ENCODE measurements at regions of chr16 and their contacts with region 1.

Region 1: DNA sequence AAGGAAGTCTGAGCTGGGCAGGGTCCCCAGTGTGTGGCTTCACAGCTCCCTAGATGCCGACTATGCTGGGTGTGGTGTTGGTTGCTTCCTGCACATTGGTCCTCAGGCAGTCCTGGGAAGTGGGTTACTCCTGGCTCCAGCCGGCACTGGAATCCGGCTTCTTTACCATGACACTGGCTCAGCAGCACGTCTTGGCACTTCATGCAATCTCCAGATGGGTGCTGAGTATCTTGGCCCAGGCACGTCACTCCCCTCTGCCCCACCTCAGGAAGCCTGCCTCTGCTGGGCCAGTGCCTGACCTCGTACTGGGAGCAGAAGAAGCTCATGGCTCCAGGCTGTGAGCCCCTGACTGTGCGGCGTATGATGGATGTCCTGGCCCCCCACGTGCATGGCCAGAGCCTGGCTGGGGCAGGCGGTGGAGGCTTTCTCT is 24.5 kb downstream of the FCSK start:
- DNase-seq: peak; percentile 52
- H3K4me3 Mint-ChIP-seq: no peak overlapping the region
- H3K27ac Mint-ChIP-seq: peak overlapping the region; percentile 34
- H3K4me1 Mint-ChIP-seq: peaks cover 16% of the 10 kb centered on the region
- H3K27me3 Mint-ChIP-seq: no peaks in the 10 kb centered on the region

Region 2: DNA sequence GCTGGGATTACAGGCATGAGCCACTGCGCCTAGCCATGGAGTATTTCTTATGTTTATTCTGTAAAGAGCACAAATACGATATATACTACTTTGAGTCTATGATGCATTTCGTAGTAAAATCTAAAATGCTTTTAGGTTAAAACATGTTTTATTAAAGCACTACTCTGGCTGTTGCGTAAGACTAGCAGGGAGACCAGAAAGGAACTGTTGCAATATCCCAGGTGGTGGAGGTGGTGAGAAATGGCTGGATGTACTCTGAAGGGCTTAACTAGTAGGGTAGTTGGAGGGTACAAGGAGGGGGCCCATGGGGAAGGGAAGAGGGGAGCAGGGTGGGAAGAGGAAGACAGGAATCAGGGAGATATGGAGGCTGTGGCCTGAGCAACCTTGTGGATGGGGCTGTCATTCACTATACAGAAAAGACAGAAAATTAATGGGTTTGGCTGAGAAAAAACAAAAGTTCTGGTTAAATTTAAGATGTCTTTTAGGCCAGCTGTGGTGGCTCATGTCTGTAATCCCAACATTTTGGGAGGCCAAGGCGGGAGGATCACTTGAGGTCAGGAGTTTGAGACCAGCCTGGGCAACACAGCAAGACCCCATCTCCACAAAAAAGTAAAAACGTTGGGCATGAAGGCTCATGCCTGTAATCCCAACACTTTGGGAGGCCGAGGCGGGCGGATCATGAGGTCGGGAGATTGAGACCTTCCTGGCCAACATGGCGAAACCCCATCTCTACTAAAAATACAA is 75.8 kb before region 1 on chr16:
- intact Hi-C with region 1: loop called (anchors 5 kb)
- DNase-seq: no peak
- H3K4me3 Mint-ChIP-seq: no peak overlapping the region
- H3K27ac Mint-ChIP-seq: peak overlapping the region; percentile 89
- H3K4me1 Mint-ChIP-seq: peaks cover 41% of the 10 kb centered on the region
- H3K27me3 Mint-ChIP-seq: no peaks in the 10 kb centered on the region

Region 3: DNA sequence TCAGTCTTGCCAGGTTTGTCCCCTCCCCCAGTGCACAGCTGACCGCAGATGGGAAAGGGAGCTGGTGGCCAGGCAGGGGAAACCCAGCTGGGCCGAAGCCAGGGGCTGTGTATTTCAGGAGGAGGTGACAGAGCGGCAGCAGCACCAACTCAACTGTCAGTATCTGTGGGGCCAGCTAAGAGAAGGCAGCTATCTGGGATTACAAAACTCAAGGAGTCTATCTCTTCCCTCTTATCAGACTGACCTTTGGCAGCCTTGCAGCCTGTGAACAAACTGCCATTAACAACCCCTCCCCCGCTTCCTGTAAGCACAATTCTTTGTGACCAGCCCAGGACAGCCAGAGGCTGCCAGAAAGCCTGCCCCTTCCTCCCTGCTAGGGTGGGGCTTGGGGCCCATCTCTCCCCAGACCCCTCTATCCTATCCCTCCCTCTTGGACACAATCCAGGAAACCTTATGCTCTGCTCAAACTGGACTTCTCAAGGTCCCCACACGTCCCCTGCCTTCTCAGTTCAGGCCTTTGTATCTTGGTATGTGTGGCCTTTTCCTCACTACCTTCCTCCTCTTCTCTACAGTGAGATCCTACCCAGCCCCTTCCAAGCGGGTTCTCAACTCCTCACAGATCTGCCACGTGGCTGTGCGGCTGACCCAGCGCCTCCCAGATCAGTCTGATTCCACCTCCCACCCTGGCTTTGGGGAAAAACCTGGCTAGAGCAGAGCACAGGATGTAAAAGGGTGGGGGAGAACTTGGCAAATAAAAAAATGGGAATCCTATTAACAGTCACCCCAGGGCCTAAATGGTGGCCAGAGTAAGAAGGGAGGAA is 50.5 kb before region 1 on chr16:
- intact Hi-C with region 1: loop called (anchors 2 kb)
- DNase-seq: peak; percentile 83
- H3K4me3 Mint-ChIP-seq: peak overlapping the region; percentile 56
- H3K27ac Mint-ChIP-seq: peak overlapping the region; percentile 67
- H3K4me1 Mint-ChIP-seq: peaks cover 56% of the 10 kb centered on the region
- H3K27me3 Mint-ChIP-seq: no peaks in the 10 kb centered on the region

Region 4: DNA sequence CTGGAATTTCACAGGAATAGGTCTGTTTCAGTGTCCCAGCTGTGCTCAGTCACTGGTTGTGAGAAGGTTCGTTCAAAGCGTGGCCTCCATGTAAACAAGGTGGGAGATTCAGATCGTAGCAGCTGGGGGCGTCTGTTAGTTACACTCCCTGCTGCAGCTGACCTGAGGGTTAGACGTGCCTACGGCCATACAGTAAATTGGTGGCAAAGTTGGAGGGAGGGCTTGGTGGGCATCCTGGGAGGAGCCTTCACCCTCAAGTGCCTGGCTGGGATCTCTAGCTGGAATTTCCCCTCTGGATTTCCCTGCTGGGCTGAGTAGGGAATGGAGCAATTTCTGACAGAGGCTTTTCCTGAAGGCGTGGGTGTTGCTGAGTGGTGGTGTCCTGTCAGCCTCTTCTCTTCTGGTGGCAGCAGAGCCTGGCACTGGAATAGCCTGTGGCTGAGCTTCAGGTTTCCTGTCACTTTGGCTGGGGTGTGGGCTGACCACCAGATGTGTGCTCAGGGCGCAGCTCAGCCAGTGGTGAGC is 18.1 kb before region 1 on chr16:
- intact Hi-C with region 1: no loop called
- DNase-seq: no peak
- H3K4me3 Mint-ChIP-seq: no peak overlapping the region
- H3K27ac Mint-ChIP-seq: no peak overlapping the region
- H3K4me1 Mint-ChIP-seq: peaks cover 5% of the 10 kb centered on the region
- H3K27me3 Mint-ChIP-seq: no peaks in the 10 kb centered on the region

Region 5: DNA sequence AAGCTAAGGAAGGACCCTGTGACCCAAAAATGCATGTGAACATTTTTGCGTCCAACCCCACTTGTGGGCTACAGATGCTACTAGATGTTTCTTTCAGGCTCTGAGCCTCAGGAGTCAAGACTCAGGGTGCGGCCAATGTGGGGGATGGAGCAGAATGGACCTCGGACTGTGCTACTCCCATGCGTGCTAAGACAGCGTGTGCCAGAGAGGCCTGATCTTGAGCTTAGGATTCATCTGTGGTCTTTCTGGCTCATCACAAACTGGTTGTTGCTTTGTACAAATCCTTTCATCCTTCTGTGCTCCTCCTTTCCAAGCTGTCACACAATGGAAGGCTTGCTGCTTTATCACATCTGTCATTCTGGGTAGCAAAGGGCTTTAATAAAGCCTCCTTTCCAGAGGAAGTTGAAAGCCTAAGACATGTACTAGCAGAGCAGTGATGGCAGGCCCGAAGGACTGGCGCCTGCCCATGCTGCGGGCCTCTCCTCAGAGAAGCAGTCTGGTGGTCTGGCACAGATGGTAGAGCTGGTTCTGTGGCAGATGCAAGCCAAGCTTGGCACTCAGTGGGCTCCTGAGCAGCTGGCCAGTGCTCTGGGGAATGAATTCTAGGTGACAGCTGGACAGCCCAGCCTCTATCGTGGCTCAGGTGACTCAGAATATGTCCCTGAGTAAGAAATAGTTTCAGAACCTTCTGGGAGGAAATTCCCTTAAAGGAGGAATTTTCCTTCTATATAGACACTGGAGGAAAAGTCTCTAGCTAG is 16.7 kb after region 1 on chr16:
- intact Hi-C with region 1: loop called (anchors 2 kb)
- DNase-seq: no peak
- H3K4me3 Mint-ChIP-seq: no peak overlapping the region
- H3K27ac Mint-ChIP-seq: no peak overlapping the region
- H3K4me1 Mint-ChIP-seq: peaks cover 14% of the 10 kb centered on the region
- H3K27me3 Mint-ChIP-seq: no peaks in the 10 kb centered on the region